OCI-LY7 (cell line): ENCODE measurements at regions of chr9 and their contacts with region 1.

Region 1: DNA sequence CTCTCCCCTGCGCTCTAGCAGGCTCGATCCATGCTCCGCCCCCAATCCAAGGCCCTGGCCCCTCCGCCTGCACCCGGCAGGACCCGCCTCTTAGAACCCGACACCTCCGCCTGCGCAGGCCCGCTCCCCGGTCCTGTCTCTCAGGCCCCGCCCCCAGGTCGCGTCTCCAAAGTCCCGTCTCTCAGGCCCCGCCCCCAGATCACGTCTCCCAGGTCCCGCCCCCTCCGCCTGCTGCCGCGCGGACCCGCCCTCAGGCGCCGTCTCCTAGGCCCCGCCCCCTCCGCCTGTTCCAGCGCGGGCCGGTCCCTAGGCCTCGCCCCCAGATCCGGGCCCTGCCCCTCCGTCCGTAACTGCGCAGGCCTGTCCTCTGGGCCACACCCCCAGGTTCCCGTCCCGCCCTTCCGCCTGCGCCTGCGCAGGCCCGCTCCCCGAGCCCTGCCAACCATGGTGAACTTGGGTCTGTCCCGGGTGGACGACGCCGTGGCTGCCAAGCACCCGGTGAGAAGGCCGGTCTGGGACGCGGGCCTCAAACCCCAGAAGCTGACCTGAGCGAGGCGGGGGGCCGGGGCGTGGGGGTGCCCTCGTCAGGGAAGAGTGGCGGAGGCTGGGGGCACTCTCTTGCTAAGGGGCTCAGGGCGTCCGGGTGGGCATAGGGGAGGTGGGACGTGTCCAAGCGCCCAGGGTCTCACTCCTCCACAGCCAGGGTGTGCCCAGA is at the start of gene TMEM141:
- DNase-seq: peak; percentile 99
- H3K4me3 ChIP-seq: peak within 1 kb of the TSS; percentile 72
- H3K27ac ChIP-seq: peak within 1 kb of the TSS; percentile 70
- H3K4me1 ChIP-seq: peaks cover 28% of the 10 kb centered on the region
- CTCF ChIP-seq: no peak
- total RNA-seq, gene TMEM141: 61.9 and 70.2 TPM in 2 replicates

Region 2: GRCh38 chr9:136143216-136144001 is 647.7 kb before region 1 on chr9:
- CTCF ChIA-PET with region 1: no interaction called
- POLR2A ChIA-PET with region 1: no interaction called
- intact Hi-C with region 1: no loop called
- DNase-seq: peak; percentile 39
- H3K4me3 ChIP-seq: no peak overlapping the region
- H3K27ac ChIP-seq: no peak overlapping the region
- H3K4me1 ChIP-seq: no peaks in the 10 kb centered on the region
- CTCF ChIP-seq: peak; percentile 74

Region 3: GRCh38 chr9:136807281-136808074 is 16.4 kb after region 1 on chr9 and contains the start of gene RABL6:
- CTCF ChIA-PET with region 1: no interaction called
- POLR2A ChIA-PET with region 1: interaction called, 5 read pairs
- intact Hi-C with region 1: loop called (anchors 2 kb)
- DNase-seq: peak; percentile 86
- H3K4me3 ChIP-seq: peak within 1 kb of the TSS; percentile 100
- H3K27ac ChIP-seq: peak within 1 kb of the TSS; percentile 73
- H3K4me1 ChIP-seq: peaks cover 28% of the 10 kb centered on the region
- CTCF ChIP-seq: no peak
- total RNA-seq, gene RABL6: 97.0 and 113 TPM in 2 replicates

Region 4: GRCh38 chr9:136944519-136945279 is 153.6 kb after region 1 on chr9 and contains the starts of genes C8G and FBXW5:
- CTCF ChIA-PET with region 1: interaction called, 3 read pairs
- POLR2A ChIA-PET with region 1: interaction called, 4 read pairs
- intact Hi-C with region 1: loop called (anchors 1 kb)
- DNase-seq: peak; percentile 98
- H3K4me3 ChIP-seq: peak within 1 kb of the TSS; percentile 82
- H3K27ac ChIP-seq: peak within 1 kb of the TSS; percentile 40
- H3K4me1 ChIP-seq: peaks cover 29% of the 10 kb centered on the region
- CTCF ChIP-seq: peak; percentile 86
- total RNA-seq, gene C8G: 0.95 and 1.0 TPM in 2 replicates
- total RNA-seq, gene FBXW5: 78.7 and 89.6 TPM in 2 replicates

Region 5: GRCh38 chr9:137029058-137029936 is 238.2 kb after region 1 on chr9:
- CTCF ChIA-PET with region 1: interaction called, 3 read pairs
- POLR2A ChIA-PET with region 1: no interaction called
- intact Hi-C with region 1: loop called (anchors 2 kb)
- DNase-seq: peak; percentile 78
- H3K4me3 ChIP-seq: peak overlapping the region; percentile 65
- H3K27ac ChIP-seq: no peak overlapping the region
- H3K4me1 ChIP-seq: peaks cover 45% of the 10 kb centered on the region
- CTCF ChIP-seq: peak; percentile 83

Region 6: GRCh38 chr9:137034863-137035761 is 244.0 kb after region 1 on chr9:
- CTCF ChIA-PET with region 1: no interaction called
- POLR2A ChIA-PET with region 1: no interaction called
- intact Hi-C with region 1: loop called (anchors 1 kb)
- DNase-seq: peak; percentile 90
- H3K4me3 ChIP-seq: no peak overlapping the region
- H3K27ac ChIP-seq: no peak overlapping the region
- H3K4me1 ChIP-seq: peaks cover 30% of the 10 kb centered on the region
- CTCF ChIP-seq: peak; percentile 88